ENCODE measurements at regions of chr2 and their contacts with region 1.

Region 1: DNA sequence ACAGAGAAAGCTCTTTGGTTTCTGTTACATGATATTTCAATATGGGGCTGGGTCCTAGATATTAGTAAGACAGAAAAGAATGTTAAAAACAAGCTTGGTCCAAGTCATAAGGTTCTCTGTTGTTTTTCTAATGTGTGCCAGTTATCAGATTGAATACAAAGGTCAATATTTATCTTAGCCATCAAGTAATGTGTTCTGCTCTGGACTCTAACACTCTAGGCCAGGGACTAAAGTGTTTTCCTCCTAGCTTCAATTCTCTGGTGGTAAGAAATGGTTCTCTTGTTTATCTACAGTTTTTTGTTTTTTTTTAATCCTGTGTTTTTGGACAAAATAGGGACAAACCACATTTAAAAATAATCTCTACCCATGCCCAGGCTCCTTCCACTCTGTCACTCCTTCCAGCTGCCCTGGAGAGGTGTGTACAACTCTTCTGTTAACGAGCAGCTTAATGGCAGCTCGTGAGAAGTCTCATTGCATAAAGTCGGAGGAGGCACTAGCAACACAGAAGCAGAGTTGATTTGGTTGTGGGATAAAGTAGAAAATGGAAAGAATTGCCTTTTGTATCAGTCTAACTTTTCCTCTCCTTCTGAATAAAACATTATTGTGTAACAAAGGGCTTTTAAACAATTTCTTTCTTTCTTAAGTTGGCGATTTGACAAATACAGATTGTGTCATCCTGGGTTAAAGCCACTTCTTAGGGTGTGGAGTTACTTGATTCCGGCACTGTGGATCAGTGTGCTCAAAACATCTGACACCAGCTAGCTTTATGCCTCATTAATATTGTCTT is 8.0 kb upstream of the SESTD1 start:
- DNase-seq: peak; percentile 51 to 94
- H3K4me3 ChIP-seq: peak overlapping the region; percentile 21; the same call in 1 of the 2 replicates
- H3K27ac ChIP-seq: peak overlapping the region; percentile 88
- H3K4me1 ChIP-seq: peaks cover 83% of the 10 kb centered on the region
- H3K27me3 ChIP-seq: no peaks in the 10 kb centered on the region
- CTCF ChIP-seq: no peak

Region 2: GRCh38 chr2:179181002-179181401 is 91.6 kb before region 1 on chr2:
- CTCF ChIA-PET with region 1: no interaction called
- POLR2A ChIA-PET with region 1: interaction called, 12 read pairs
- intact Hi-C with region 1: no loop called
- DNase-seq: no peak
- H3K4me3 ChIP-seq: no peak overlapping the region
- H3K27ac ChIP-seq: no peak overlapping the region
- H3K4me1 ChIP-seq: no peaks in the 10 kb centered on the region
- H3K27me3 ChIP-seq: no peaks in the 10 kb centered on the region
- CTCF ChIP-seq: no peak

Region 3: DNA sequence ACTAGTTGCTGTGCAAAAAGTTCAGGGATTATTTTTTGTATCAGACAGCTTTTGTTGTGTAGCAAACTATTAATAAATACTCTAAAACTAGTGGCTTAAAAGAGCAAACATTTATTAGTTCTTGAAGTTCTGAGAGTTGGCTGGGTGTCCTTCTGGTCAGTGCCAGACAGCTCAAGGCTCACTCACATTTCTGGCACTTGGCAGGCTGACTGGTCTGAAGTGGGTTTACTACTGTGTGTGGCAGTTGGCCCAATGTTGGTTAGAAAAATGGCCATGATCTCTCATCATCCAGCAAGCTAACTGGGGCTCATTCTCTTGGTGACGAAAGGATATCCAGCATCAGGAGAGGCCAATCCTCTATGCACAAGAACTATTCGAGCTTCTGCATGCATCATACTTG is 660.2 kb after region 1 on chr2:
- CTCF ChIA-PET with region 1: no interaction called
- POLR2A ChIA-PET with region 1: no interaction called
- intact Hi-C with region 1: no loop called
- DNase-seq: no peak
- H3K4me3 ChIP-seq: no peak overlapping the region
- H3K27ac ChIP-seq: no peak overlapping the region
- H3K4me1 ChIP-seq: no peaks in the 10 kb centered on the region
- H3K27me3 ChIP-seq: no peaks in the 10 kb centered on the region
- CTCF ChIP-seq: no peak